ENCODE measurements at regions of chr2 and their contacts with region 1.

Region 1: DNA sequence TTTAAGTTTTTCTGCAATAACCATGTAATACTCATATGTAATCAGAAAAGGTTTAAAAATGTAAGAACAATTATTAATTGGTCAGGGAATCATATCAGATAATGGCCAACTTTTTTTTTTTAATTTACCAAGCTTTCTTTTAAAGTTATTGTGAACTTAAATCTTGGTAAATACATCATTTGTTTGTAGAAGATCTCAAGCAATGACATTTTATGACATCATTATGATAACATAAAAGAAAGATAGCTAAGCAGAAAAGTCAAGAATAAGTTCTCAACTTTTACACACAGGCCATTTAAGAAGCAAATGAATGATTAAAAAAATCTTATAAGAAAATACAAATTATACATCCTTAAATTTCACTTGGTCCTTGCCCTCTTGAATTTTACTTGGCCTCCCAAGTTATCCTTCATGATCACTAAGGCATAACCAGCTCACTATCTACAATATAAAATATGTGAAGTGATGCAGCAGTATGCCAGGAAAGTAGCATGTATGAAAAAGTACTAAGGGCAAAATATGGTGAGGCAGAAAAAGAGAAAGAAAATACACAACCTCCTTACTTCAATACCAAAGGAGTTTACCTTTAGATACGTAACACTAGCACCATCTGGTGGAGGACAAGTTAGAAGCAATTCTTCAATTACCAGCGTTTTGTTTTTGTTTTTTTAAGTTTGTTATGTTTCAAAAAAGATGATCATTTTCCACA is 116.6 kb downstream of the SRBD1 start:
- DNase-seq: peak; percentile 41
- H3K4me3 ChIP-seq: no peak overlapping the region
- H3K27ac ChIP-seq: no peak overlapping the region
- H3K27me3 ChIP-seq: no peaks in the 10 kb centered on the region
- CTCF ChIP-seq: peak; percentile 81

Region 2: GRCh38 chr2:44981136-44982108 is 513.0 kb before region 1 on chr2:
- CTCF ChIA-PET with region 1: interaction called, 287 read pairs
- POLR2A ChIA-PET with region 1: no interaction called
- DNase-seq: peak; percentile 55
- H3K4me3 ChIP-seq: no peak overlapping the region
- H3K27ac ChIP-seq: no peak overlapping the region
- H3K27me3 ChIP-seq: peaks cover 16% of the 10 kb centered on the region
- CTCF ChIP-seq: peak; percentile 86

Region 3: GRCh38 chr2:45483997-45484396 is 10.4 kb before region 1 on chr2:
- CTCF ChIA-PET with region 1: interaction called, 18 read pairs
- POLR2A ChIA-PET with region 1: no interaction called
- DNase-seq: no peak
- H3K4me3 ChIP-seq: no peak overlapping the region
- H3K27ac ChIP-seq: no peak overlapping the region
- H3K27me3 ChIP-seq: no peaks in the 10 kb centered on the region
- CTCF ChIP-seq: peak; percentile 33

Region 4: DNA sequence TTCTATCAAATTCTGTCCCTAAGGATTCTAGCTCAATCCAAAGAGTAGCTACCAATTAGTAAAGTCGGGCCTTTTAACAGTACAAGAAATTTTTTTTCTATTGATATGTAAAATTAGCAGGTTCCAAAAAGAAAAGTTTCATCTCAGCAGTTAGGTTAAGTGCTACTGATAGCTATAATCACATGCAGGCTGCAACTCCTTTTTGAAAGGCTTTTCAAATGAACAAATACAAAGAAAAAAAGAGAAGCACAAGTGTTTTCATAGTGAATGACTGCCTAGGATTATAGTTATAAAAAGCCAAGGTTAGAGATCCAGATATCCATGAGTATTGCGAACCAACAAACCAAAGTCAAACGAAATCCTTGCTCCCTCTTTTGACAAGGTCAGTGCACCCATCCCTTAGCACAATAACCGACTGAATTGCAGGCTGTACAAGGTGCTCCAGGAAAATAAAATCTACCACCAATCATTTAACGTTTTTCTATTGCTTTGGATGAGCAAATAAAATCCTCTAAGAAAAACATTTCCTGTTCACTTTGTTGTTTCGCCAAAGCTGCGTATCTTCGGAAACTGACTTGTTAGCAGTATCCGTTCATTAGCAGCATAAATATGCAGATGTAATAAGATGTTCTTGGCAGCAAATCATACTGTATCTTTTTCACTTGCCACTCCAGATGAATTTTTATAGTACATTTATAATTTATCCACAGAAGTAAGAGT is 16.4 kb after region 1 on chr2:
- CTCF ChIA-PET with region 1: interaction called, 32 read pairs
- POLR2A ChIA-PET with region 1: no interaction called
- DNase-seq: no peak
- H3K4me3 ChIP-seq: no peak overlapping the region
- H3K27ac ChIP-seq: no peak overlapping the region
- H3K27me3 ChIP-seq: no peaks in the 10 kb centered on the region
- CTCF ChIP-seq: no peak

Region 5: GRCh38 chr2:45712570-45712969 is 218.1 kb after region 1 on chr2:
- CTCF ChIA-PET with region 1: no interaction called
- POLR2A ChIA-PET with region 1: no interaction called
- DNase-seq: no peak
- H3K4me3 ChIP-seq: no peak overlapping the region
- H3K27ac ChIP-seq: no peak overlapping the region
- H3K27me3 ChIP-seq: no peaks in the 10 kb centered on the region
- CTCF ChIP-seq: no peak; the same call in 1 of the 2 replicates

Region 6: DNA sequence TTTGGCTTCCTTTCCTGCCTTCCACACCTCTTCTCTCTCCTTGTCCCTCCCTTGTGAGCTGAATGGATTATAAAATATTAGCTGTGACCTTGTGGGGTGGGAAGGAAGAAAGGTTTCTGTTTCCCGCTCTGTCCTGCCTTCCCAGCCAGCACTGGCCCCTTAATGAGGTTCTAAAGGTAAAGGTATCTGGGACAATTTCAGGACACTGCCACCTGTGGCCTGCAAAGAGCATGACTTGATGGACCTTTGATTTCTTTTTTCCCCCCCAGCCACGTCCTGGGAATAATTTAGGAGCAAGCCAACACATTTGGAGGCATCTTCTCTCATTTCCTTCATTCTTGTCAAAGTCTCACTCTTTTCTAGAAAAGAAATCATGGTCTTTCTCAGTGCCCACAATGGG is 556.1 kb after region 1 on chr2:
- CTCF ChIA-PET with region 1: no interaction called
- POLR2A ChIA-PET with region 1: no interaction called
- DNase-seq: no peak
- H3K4me3 ChIP-seq: no peak overlapping the region
- H3K27ac ChIP-seq: no peak overlapping the region
- H3K27me3 ChIP-seq: no peaks in the 10 kb centered on the region
- CTCF ChIP-seq: no peak